ENCODE measurements at regions of chr1 and their contacts with region 1.

Region 1: DNA sequence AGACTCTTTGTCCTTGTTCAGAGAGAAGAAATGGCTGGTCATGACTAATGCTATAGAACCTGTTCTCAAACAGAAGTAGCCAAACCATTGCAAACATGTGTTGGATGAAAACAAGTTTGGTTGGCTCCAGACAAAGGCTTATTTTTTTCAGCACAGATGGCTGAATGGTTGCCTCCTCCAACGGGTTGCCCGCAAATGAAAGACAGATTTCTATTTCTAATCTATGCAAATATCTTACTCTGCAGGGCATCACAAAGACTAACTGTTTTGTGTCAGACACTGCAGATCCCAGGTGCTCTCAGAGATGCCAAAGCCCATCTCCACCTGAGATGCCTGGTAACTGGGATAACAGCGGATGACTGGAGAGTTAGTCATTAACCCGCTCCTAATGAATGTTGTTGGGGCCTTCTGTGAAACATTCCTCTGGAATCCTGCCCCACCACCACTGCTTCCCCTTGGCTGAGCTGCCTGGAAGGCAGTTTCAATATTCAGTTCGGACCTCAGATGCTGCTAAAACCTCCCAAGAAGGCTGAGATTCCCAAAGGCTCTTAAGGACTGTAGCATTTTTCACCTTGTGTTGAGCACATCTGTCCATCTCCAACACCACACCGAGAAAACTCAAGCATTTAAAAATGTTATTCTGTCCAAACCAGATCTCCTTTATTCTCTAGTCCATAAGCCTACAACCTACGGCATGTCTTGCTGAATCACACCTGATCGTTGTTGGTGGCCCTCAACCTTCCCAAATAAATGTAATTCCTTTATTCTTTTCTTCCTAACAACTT is 104.4 kb downstream of the PTPN14 start:
- DNase-seq: peak; percentile 79
- H3K4me3 ChIP-seq: no peak overlapping the region
- H3K27ac ChIP-seq: peak overlapping the region; percentile 90
- H3K4me1 ChIP-seq: peaks cover 71% of the 10 kb centered on the region
- H3K27me3 ChIP-seq: no peaks in the 10 kb centered on the region
- CTCF ChIP-seq: no peak

Region 2: DNA sequence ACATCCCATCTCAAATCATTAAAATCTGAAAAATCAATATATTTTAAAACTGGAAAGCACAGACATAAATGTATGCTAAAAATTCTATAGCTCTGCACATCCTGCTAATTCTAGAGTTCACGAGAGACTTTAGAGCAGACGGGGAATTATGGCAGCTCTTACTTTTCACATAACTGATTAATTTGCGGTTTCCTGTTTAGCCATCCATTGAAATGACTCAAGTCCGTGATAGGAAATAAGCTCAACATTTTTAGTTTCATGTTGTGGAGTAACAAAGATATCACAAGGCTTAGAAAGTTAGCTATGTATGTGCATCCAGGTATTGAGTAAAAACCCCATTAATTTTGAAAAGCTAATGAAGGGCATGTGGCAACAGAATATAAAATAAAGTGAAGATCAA is 42.8 kb before region 1 on chr1:
- CTCF ChIA-PET with region 1: no interaction called
- POLR2A ChIA-PET with region 1: no interaction called
- intact Hi-C with region 1: loop called (anchors 2 kb)
- DNase-seq: peak; percentile 97
- H3K4me3 ChIP-seq: no peak overlapping the region
- H3K27ac ChIP-seq: peak overlapping the region; percentile 95
- H3K4me1 ChIP-seq: peaks cover 92% of the 10 kb centered on the region
- H3K27me3 ChIP-seq: no peaks in the 10 kb centered on the region
- CTCF ChIP-seq: no peak

Region 3: GRCh38 chr1:214494706-214495105 is 47.7 kb after region 1 on chr1:
- CTCF ChIA-PET with region 1: no interaction called
- POLR2A ChIA-PET with region 1: no interaction called
- intact Hi-C with region 1: loop called (anchors 5 kb)
- DNase-seq: no peak
- H3K4me3 ChIP-seq: no peak overlapping the region
- H3K27ac ChIP-seq: peak overlapping the region; percentile 20
- H3K4me1 ChIP-seq: peaks cover 57% of the 10 kb centered on the region
- H3K27me3 ChIP-seq: no peaks in the 10 kb centered on the region
- CTCF ChIP-seq: no peak

Measured in A673 (cell line).